ENCODE measurements at regions of chr1 and their contacts with region 1.

Region 1: GRCh38 chr1:86714159-86714558 is 9.8 kb downstream of the SH3GLB1 start:
- DNase-seq: no peak
- ATAC-seq: peak; percentile 14
- H3K4me3 ChIP-seq: no peak overlapping the region
- H3K4me3 Mint-ChIP-seq: no peak overlapping the region
- H3K27ac ChIP-seq: no peak overlapping the region
- H3K27ac Mint-ChIP-seq: peak overlapping the region; percentile 73
- H3K4me1 ChIP-seq: peaks cover 15% of the 10 kb centered on the region
- H3K4me1 Mint-ChIP-seq: peaks cover 55% of the 10 kb centered on the region
- H3K27me3 ChIP-seq: no peaks in the 10 kb centered on the region
- H3K27me3 Mint-ChIP-seq: no peaks in the 10 kb centered on the region
- CTCF ChIP-seq: no peak

Region 2: DNA sequence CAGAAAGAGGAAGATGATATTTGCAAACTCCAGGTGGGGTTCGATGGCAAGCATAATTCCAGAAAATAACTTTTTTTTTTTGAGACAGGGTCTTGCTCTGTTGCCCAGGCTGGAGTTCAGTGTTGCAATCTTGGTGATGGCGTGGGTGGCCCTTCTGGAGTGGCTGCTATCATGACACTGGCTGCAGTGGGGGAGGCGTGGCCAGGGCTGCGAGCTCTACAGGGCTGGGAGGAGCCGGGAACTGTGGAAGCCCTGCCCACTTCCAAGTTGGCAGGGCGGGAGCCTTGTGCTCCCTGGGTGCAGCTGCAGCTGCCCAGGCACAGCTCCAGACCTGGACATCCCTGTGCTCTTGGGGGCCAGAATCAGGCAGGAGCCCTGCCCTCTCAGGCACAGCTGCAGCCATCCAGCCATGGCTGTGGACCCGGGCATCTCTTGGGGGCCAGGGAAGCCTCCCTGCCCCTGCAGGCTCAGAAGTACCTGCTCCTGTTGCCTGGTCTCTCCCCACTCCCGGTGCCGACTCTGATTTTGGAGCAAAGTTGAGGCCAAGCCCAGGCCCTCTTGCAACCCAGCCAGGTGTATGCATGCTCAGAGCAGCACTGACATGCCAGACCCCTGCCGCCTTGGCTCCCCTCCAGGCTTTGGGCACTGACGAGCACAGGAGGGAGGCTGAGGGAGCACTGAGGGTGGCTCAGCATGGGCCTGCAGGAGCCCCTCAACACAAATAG is 1430.5 kb before region 1 on chr1:
- CTCF ChIA-PET with region 1: no interaction called
- POLR2A ChIA-PET with region 1: no interaction called
- intact Hi-C with region 1: loop called (anchors 5 to 10 kb)
- DNase-seq: no peak
- ATAC-seq: no peak
- H3K4me3 ChIP-seq: no peak overlapping the region
- H3K4me3 Mint-ChIP-seq: no peak overlapping the region
- H3K27ac ChIP-seq: no peak overlapping the region
- H3K27ac Mint-ChIP-seq: no peak overlapping the region
- H3K4me1 ChIP-seq: no peaks in the 10 kb centered on the region
- H3K4me1 Mint-ChIP-seq: peaks cover 5% of the 10 kb centered on the region
- H3K27me3 ChIP-seq: no peaks in the 10 kb centered on the region
- H3K27me3 Mint-ChIP-seq: no peaks in the 10 kb centered on the region
- CTCF ChIP-seq: no peak

Region 3: DNA sequence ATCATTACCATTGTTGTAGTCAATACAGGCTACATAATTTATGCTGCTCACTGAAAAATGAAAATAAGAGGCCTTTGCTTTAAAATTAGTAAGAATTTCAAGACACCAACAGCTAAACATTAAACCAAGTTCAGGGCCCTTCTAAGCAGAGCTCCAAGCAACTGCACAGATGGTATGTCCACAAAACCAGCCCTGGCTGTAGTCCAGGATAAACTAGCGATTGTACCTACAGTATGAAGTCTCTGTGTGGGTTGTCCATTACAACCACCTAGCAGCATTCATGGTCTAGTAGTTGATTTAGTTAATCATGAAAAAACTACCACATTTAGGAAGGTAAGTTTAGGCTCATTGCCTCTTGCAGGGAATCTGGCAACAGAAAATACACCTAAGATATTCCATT is 132.0 kb before region 1 on chr1:
- CTCF ChIA-PET with region 1: no interaction called
- POLR2A ChIA-PET with region 1: no interaction called
- intact Hi-C with region 1: no loop called
- DNase-seq: no peak
- ATAC-seq: no peak
- H3K4me3 ChIP-seq: no peak overlapping the region
- H3K4me3 Mint-ChIP-seq: no peak overlapping the region
- H3K27ac ChIP-seq: no peak overlapping the region
- H3K27ac Mint-ChIP-seq: no peak overlapping the region
- H3K4me1 ChIP-seq: no peaks in the 10 kb centered on the region
- H3K4me1 Mint-ChIP-seq: no peaks in the 10 kb centered on the region
- H3K27me3 ChIP-seq: no peaks in the 10 kb centered on the region
- H3K27me3 Mint-ChIP-seq: no peaks in the 10 kb centered on the region
- CTCF ChIP-seq: no peak